Natural killer cell (primary cell): ENCODE measurements at regions of chr15 and their contacts with region 1.

Region 1: GRCh38 chr15:84981054-84981710 is 474 bp upstream of the PDE8A start:
- DNase-seq: peak; percentile 96 to 98
- ATAC-seq: peak; percentile 69 to 86 (median 73)
- H3K4me3 ChIP-seq: peak overlapping the region; percentile 82
- H3K4me3 Mint-ChIP-seq: peak overlapping the region; percentile 97
- H3K27ac ChIP-seq: peak overlapping the region; percentile 100
- H3K27ac Mint-ChIP-seq: peak overlapping the region; percentile 90
- H3K4me1 ChIP-seq: peaks cover 19% of the 10 kb centered on the region
- H3K4me1 Mint-ChIP-seq: peaks cover 29 to 30% of the 10 kb centered on the region in 2 donors
- H3K27me3 ChIP-seq: no peaks in the 10 kb centered on the region
- H3K27me3 Mint-ChIP-seq: no peaks in the 10 kb centered on the region
- CTCF ChIP-seq: no peak

Region 2: DNA sequence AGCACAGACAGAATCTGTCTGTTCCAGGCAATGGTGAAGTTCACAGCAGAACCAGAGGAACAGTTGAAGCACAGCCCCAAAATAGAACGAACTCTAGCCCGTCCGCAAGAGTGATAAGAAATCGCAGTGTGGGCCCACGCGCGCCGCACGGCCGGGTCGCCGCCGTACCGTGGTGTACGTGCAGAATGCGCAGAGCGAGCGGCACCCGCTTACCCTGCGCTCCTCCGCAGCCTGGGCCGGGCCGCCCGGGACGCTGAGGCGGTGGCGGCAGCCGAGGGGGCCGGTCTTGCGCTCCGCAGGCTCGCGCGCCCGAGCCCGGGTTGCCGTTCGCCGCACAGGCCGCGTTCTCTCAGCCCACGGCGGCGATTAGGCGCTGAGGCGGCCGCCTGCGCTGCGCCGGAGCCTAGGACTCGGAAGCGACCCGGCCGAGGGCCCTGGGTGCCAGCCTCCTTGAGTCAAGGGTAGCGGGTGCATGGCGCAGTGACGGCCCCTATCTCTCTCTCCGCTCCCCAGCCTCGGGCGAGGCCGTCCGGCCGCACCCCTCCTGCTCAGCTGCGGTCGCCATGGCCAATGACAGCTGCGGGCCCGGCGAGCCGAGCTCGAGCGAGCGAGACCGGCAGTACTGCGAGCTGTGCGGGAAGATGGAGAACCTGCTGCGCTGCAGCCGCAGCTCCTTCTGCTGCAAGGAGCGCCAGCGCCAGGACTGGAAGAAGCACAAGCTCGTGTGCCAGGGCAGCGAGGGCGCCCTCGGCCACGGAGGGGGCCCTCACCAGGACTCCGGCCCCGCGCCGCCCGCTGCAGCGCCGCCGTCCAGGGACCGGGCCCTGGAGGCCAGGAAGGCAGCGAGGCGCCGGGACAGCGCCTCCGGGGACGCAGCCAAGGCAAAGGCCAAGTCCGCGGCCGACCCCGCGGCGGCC is 347.6 kb before region 1 on chr15:
- intact Hi-C with region 1: loop called (anchors 5 kb)
- DNase-seq: peak; percentile 55 to 79
- ATAC-seq: peak; percentile 39 to 73 (median 57)
- H3K4me3 ChIP-seq: peak overlapping the region; percentile 47
- H3K4me3 Mint-ChIP-seq: peak overlapping the region; percentile 99
- H3K27ac ChIP-seq: peak overlapping the region; percentile 74
- H3K27ac Mint-ChIP-seq: peak overlapping the region; percentile 88 to 95
- H3K4me1 ChIP-seq: peaks cover 29% of the 10 kb centered on the region
- H3K4me1 Mint-ChIP-seq: peaks cover 44 to 45% of the 10 kb centered on the region in 2 donors
- H3K27me3 ChIP-seq: no peaks in the 10 kb centered on the region
- H3K27me3 Mint-ChIP-seq: no peaks in the 10 kb centered on the region
- CTCF ChIP-seq: no peak

Region 3: GRCh38 chr15:85030301-85031049 is 49.3 kb after region 1 on chr15:
- intact Hi-C with region 1: loop called (anchors 10 kb)
- DNase-seq: peak in 1 of 2 donors; percentile 34
- ATAC-seq: peak; percentile 64 to 83 (median 82)
- H3K4me3 ChIP-seq: no peak overlapping the region
- H3K4me3 Mint-ChIP-seq: peak overlapping the region; percentile 52
- H3K27ac ChIP-seq: no peak overlapping the region
- H3K27ac Mint-ChIP-seq: peak overlapping the region; percentile 61 to 71
- H3K4me1 ChIP-seq: peaks cover 18% of the 10 kb centered on the region
- H3K4me1 Mint-ChIP-seq: peaks cover 49 to 59% of the 10 kb centered on the region in 2 donors
- H3K27me3 ChIP-seq: no peaks in the 10 kb centered on the region
- H3K27me3 Mint-ChIP-seq: no peaks in the 10 kb centered on the region
- CTCF ChIP-seq: no peak

Region 4: DNA sequence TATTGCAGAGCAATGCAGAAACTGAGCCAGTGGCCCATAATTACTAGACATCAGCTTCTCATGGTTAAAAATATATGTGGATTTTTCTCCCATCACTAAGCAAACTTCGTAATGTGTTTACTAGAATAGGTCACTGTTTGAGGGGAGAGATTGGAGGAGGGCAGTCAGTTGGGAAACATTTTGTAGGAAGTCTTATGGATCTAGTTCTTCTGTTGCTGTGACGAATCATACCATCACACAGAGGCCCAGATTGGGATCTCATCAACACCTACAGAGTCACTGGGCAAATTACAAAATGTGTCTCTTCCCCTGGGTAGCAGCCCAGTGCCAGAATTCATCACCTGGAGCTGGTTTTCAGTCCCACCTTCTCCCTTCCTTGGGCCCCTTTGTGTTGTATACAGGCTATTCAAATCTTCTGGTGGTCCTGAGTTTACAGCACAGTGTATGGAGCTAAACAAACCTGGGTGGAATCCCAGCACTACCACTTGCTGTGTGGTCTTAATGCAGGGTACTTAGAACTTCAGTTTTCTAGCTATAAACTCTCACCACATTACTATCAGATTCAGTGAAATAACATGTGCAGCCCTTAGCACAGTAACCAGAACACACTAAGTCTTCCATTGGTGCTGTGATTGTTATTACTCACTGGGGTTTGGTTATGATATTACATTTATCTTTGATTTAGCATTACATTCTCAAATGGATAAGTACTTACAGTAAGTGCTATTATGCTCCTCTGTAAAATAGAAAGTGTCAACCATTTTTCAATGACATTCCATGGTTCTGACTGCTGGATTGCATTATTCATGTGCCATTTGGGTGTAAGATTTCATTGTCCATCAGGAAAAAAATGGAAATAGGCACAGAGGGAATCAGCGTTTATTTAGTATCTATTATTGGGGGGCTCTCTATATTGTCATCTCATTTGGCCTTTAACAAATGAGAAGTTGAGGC is 82.2 kb after region 1 on chr15:
- intact Hi-C with region 1: no loop called
- DNase-seq: no peak
- ATAC-seq: no peak
- H3K4me3 ChIP-seq: no peak overlapping the region
- H3K4me3 Mint-ChIP-seq: no peak overlapping the region
- H3K27ac ChIP-seq: no peak overlapping the region
- H3K27ac Mint-ChIP-seq: no peak overlapping the region
- H3K4me1 ChIP-seq: no peaks in the 10 kb centered on the region
- H3K4me1 Mint-ChIP-seq: peaks cover 36 to 37% of the 10 kb centered on the region in 2 donors
- H3K27me3 ChIP-seq: no peaks in the 10 kb centered on the region
- H3K27me3 Mint-ChIP-seq: no peaks in the 10 kb centered on the region
- CTCF ChIP-seq: no peak

Region 5: GRCh38 chr15:85794603-85795336 is 813.6 kb after region 1 on chr15 and contains the start of gene KLHL25:
- intact Hi-C with region 1: loop called (anchors 2 kb)
- DNase-seq: peak; percentile 86 to 96
- ATAC-seq: peak; percentile 96 to 98 (median 96)
- H3K4me3 ChIP-seq: peak within 1 kb of the TSS; percentile 64
- H3K4me3 Mint-ChIP-seq: peak within 1 kb of the TSS; percentile 94
- H3K27ac ChIP-seq: peak within 1 kb of the TSS; percentile 32
- H3K27ac Mint-ChIP-seq: peak within 1 kb of the TSS; percentile 72 to 88
- H3K4me1 ChIP-seq: peaks cover 25% of the 10 kb centered on the region
- H3K4me1 Mint-ChIP-seq: peaks cover 25 to 30% of the 10 kb centered on the region in 2 donors
- H3K27me3 ChIP-seq: no peaks in the 10 kb centered on the region
- H3K27me3 Mint-ChIP-seq: peaks cover 0 to 5% of the 10 kb centered on the region in 2 donors
- CTCF ChIP-seq: no peak
- total RNA-seq, gene KLHL25: 6.5 to 16.2 (median 10.4) TPM